HEK293T (cell line): ENCODE measurements at regions of chr10 and their contacts with region 1.

Region 1: DNA sequence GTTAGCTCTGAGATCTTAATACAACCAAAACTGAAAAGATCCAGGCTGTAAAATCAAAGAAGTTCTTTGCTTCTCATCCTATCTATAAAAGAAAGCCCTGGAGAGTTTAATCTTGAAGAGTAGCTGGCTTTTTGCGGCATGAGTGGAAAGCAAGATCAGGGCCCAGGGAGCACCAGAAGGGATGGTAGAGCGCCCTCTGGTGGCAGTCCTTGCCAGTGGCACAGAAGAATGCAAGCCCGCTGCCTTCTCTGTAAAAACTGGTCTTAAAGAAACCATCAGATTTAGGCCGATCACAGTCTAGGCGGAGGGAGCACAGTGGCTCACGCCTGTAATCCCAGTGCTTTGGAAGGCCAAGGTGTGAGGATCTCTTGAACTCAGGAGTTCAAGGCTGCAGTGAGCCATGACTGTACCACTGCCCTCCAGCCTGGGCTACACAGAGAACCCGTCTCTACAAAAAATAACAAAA is 35.6 kb downstream of the CPN1 start:
- DNase-seq: peak; percentile 86

Region 2: DNA sequence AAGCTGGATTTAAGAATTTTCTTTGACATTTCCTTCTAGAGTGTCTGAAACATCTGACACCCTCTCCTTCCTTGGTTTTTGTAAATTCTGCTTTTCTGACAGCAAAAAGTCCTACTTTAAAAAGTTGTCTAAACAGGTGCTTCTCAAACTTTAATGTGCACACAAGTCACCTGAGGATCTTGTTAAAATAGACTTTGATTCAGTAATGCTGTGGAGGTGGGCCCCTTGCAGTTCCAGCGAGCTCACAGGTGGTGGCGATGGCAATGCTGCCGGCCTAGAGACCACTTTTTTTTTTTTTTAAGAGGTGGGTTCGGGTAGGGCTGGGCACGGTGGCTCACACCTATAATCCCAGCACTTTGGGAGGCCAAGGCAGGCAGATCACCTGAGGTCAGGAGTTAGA is 186.5 kb before region 1 on chr10:
- CTCF ChIA-PET with region 1: interaction called, 15 read pairs
- POLR2A ChIA-PET with region 1: no interaction called
- DNase-seq: peak; percentile 64

Region 3: DNA sequence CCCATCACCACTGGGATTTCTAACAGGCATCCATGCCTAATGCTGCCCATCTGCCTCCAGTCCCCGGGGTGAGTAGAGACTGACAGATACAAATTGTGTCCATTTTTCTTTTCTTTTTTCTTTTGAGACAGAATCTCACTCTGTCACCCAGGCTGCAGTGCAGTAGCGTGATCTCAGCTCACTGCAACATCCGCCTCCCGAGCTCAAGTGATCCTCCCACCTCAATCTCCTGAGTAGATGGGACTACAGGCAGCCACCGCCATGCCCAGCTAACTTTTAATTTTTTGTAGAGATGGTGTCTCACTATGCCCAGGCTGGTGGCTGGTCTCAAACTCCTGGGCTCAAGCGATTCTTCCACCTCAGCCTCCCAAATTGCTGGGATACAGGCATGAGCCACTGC is 43.2 kb after region 1 on chr10:
- CTCF ChIA-PET with region 1: no interaction called
- POLR2A ChIA-PET with region 1: no interaction called
- DNase-seq: no peak